T-cell (primary cell): ENCODE measurements at regions of chr2 and their contacts with region 1.

Region 1: GRCh38 chr2:172465417-172466334 is 38.3 kb downstream of the ITGA6 start:
- DNase-seq: peak; percentile 42 to 86 (median 66)
- ATAC-seq: peak in 3 of 4 experiments; percentile 14 to 29 (median 18)
- H3K4me3 ChIP-seq: no peak overlapping the region
- H3K4me3 Mint-ChIP-seq: peak overlapping the region; percentile 18 to 82 (median 21)
- H3K27ac ChIP-seq: peak overlapping the region; percentile 66
- H3K27ac Mint-ChIP-seq: peak overlapping the region; percentile 96 to 99
- H3K4me1 ChIP-seq: peaks cover 45 to 47% of the 10 kb centered on the region in 2 experiments
- H3K4me1 Mint-ChIP-seq: peaks cover 68 to 79% (median 72%) of the 10 kb centered on the region in 3 donors
- H3K27me3 ChIP-seq: no peaks in the 10 kb centered on the region
- H3K27me3 Mint-ChIP-seq: no peaks in the 10 kb centered on the region

Region 2: DNA sequence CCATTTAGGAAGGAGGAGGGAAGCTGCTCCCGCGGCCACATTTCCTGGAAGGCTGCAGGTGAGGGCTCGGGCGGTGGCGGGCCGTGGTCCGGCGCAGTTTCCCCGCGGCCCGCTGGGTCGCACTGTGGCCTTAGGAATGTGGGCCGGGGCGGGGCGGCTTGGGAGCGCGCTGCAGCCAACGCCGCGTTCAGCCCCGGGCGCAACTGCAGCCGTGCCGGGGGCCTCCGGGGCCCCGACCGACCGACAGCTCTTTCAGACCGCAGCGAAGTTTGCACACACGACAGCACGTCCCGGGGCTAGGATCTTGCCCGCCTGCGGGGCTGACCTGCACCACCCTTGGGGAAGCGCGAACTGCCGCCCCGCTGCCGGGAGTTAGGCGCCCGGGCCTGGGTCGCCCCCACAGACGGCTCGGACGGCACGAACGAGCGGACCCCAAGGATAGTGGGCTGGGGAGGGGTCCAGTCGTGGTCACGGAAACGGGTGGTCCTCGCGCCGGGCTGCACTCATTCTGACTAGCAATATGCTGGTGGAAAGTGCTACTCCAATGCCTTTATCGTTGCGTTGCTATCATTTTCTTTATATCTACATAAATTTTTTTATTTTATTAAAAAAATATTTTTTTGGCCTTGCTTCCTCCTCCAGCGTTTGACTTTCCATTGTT is 293.0 kb before region 1 on chr2:
- CTCF ChIA-PET with region 1: interaction called, 16 to 47 read pairs
- POLR2A ChIA-PET with region 1: no interaction called
- DNase-seq: peak in 34 of 35 experiments; percentile 3 to 76 (median 43)
- ATAC-seq: peak; percentile 95 to 98 (median 96)
- H3K4me3 ChIP-seq: peak overlapping the region; percentile 53 to 83
- H3K4me3 Mint-ChIP-seq: peak overlapping the region; percentile 61 to 75 (median 69)
- H3K27ac ChIP-seq: no peak overlapping the region
- H3K27ac Mint-ChIP-seq: no peak overlapping the region
- H3K4me1 ChIP-seq: peaks cover 0 to 12% of the 10 kb centered on the region in 2 experiments
- H3K4me1 Mint-ChIP-seq: peaks cover 4 to 8% (median 6%) of the 10 kb centered on the region in 3 donors
- H3K27me3 ChIP-seq: peaks cover 0 to 19% of the 10 kb centered on the region in 2 experiments
- H3K27me3 Mint-ChIP-seq: peaks cover 0 to 8% of the 10 kb centered on the region in 2 donors

Region 3: DNA sequence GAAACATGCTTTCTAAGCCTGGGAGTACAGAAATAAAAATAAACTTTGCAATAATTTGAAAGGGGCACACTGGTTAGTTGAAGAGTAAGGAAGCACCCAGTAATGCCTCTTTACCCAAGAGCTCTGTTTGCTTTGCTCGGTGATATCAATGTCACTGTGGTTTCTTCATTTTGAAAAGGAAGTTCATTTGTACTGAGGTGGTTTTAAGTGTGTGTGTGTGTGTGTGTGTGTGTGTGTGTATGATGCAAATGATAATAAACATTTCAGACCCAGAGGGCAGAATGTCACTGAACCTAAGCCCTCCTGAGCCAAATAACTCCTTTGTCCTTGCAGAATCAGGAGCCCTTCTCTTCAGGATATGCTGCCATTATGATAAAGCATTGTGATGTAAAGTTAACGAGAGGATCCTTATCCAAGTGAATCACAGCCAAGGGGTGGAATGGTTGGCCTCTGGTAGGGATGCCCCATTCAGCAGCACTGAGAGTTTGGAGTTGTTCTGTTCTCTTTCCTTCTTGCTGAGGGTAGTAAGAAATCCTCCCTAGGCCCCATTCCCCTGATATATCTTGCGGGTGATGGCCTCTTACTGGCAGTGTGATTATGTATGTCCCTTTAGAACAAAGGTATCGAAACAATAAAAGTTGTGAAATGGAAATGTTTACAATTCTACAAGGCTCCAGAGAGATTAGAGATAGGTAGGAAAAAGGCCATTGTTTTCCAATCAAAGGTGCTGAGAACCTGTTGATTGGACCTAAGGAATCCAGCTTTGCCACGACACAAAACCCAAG is 30.7 kb before region 1 on chr2:
- CTCF ChIA-PET with region 1: interaction called, 100 to 126 read pairs
- POLR2A ChIA-PET with region 1: interaction called in 1 of 2 experiments, 5 read pairs
- DNase-seq: peak in 31 of 35 experiments; percentile 14 to 76 (median 56)
- ATAC-seq: peak; percentile 74 to 89 (median 81)
- H3K4me3 ChIP-seq: peak overlapping the region in 1 of 2 donors; percentile 28
- H3K4me3 Mint-ChIP-seq: peak overlapping the region in 2 of 3 donors; percentile 40 to 46
- H3K27ac ChIP-seq: peak overlapping the region; percentile 55
- H3K27ac Mint-ChIP-seq: peak overlapping the region in 1 of 2 donors; percentile 85
- H3K4me1 ChIP-seq: peaks cover 85 to 97% of the 10 kb centered on the region in 2 experiments
- H3K4me1 Mint-ChIP-seq: peaks cover 0 to 54% (median 0%) of the 10 kb centered on the region in 3 donors
- H3K27me3 ChIP-seq: no peaks in the 10 kb centered on the region
- H3K27me3 Mint-ChIP-seq: no peaks in the 10 kb centered on the region

Region 4: DNA sequence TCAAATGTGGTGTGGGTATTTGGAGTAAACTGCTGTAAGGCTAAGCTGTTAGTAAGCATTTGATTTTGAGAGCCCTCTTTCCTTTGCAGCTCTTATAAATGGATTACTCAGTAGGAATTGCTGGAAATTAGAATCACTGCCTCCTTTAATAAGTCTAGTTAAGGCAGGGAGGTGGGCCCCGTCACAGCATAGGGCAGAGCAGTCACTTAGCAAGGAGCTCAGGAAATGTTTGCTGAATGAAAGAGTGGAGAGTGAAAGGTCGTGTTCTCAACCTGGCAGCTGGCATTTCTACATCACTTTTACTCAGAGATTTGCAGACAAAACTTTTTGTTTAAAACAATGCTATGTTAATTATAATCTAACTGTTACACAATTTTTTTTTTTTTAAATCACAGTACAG is 12.8 kb before region 1 on chr2:
- CTCF ChIA-PET with region 1: interaction called, 22 read pairs
- POLR2A ChIA-PET with region 1: interaction called in 1 of 2 experiments, 3 read pairs
- DNase-seq: no peak
- ATAC-seq: no peak
- H3K4me3 ChIP-seq: no peak overlapping the region
- H3K4me3 Mint-ChIP-seq: peak overlapping the region in 1 of 3 donors; percentile 23
- H3K27ac ChIP-seq: no peak overlapping the region
- H3K27ac Mint-ChIP-seq: peak overlapping the region; percentile 62 to 72
- H3K4me1 ChIP-seq: peaks cover 26 to 61% of the 10 kb centered on the region in 2 experiments
- H3K4me1 Mint-ChIP-seq: peaks cover 83 to 90% (median 88%) of the 10 kb centered on the region in 3 donors
- H3K27me3 ChIP-seq: no peaks in the 10 kb centered on the region
- H3K27me3 Mint-ChIP-seq: no peaks in the 10 kb centered on the region

Region 5: DNA sequence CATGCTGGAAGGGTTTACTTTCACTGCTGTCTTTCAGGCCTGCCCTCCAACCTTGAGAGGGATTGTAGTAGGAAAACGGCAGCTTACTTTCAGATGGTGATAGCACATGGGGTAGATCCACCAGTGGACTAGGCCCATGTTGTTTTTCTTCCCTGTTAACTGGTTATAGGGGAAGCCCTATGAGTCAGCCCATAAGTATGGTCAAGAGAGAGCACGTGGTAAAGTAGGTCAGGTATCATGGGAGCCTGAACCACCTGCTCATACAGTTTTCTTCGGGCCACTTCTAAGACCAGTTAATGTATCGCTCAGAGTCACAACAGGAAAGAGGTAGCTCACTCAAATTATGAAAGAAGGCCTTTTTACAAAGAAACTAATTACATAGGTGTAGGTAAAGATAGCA is 123.3 kb after region 1 on chr2:
- CTCF ChIA-PET with region 1: interaction called in 1 of 2 experiments, 10 read pairs
- POLR2A ChIA-PET with region 1: no interaction called
- DNase-seq: no peak
- ATAC-seq: no peak
- H3K4me3 ChIP-seq: no peak overlapping the region
- H3K4me3 Mint-ChIP-seq: no peak overlapping the region
- H3K27ac ChIP-seq: no peak overlapping the region
- H3K27ac Mint-ChIP-seq: peak overlapping the region in 1 of 2 donors; percentile 16
- H3K4me1 ChIP-seq: peaks cover 5 to 14% of the 10 kb centered on the region in 2 experiments
- H3K4me1 Mint-ChIP-seq: peaks cover 30 to 54% (median 40%) of the 10 kb centered on the region in 3 donors
- H3K27me3 ChIP-seq: no peaks in the 10 kb centered on the region
- H3K27me3 Mint-ChIP-seq: no peaks in the 10 kb centered on the region